ENCODE measurements at regions of chr12 and their contacts with region 1.

Region 1: GRCh38 chr12:52023182-52023975 is 16.6 kb downstream of the TAMALIN start:
- DNase-seq: peak; percentile 95 to 96
- ATAC-seq: peak; percentile 91
- H3K4me3 ChIP-seq: peak overlapping the region; percentile 9 to 35
- H3K27ac ChIP-seq: no peak overlapping the region
- H3K4me1 ChIP-seq: no peaks in the 10 kb centered on the region
- H3K27me3 ChIP-seq: no peaks in the 10 kb centered on the region

Region 2: DNA sequence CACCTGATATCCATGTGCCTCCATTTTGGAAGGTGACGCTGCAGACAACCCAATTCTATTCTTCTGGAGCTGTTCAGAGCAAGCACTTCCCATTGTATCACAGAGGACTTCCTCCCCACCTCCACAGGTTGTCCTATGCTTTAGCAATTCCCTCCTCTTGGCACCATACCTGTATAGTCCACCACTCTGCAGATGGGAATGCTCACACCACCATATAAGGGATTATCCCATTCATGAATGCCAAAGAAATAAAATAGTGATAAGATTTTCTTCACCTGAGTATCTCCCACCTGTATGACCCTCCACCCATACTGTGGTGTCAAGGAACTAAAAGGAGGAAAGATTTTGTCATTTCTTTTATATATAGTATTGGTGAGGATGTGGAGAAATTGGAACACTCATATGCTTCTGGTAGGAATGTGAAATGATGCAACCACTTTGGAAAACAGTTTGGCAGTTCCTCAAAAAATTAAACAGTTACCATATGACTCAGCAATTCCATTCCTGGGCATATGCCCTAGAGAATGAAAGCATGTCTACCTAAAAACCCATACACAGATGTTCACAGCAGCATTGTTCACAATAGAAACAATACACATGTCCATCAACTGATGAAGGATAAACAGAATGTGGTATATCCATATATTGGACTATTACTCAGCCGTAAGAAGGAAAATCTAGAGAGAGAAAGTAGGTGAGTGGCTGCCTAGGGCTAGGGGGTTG is 250.1 kb before region 1 on chr12:
- intact Hi-C with region 1: no loop called
- DNase-seq: no peak
- ATAC-seq: no peak
- H3K4me3 ChIP-seq: no peak overlapping the region
- H3K27ac ChIP-seq: no peak overlapping the region
- H3K4me1 ChIP-seq: no peaks in the 10 kb centered on the region
- H3K27me3 ChIP-seq: peaks cover 0 to 2% of the 10 kb centered on the region in 2 donors

Region 3: GRCh38 chr12:51884676-51885229 is 138.6 kb before region 1 on chr12:
- intact Hi-C with region 1: no loop called
- DNase-seq: no peak
- ATAC-seq: no peak
- H3K4me3 ChIP-seq: no peak overlapping the region
- H3K27ac ChIP-seq: no peak overlapping the region
- H3K4me1 ChIP-seq: no peaks in the 10 kb centered on the region
- H3K27me3 ChIP-seq: no peaks in the 10 kb centered on the region

Region 4: DNA sequence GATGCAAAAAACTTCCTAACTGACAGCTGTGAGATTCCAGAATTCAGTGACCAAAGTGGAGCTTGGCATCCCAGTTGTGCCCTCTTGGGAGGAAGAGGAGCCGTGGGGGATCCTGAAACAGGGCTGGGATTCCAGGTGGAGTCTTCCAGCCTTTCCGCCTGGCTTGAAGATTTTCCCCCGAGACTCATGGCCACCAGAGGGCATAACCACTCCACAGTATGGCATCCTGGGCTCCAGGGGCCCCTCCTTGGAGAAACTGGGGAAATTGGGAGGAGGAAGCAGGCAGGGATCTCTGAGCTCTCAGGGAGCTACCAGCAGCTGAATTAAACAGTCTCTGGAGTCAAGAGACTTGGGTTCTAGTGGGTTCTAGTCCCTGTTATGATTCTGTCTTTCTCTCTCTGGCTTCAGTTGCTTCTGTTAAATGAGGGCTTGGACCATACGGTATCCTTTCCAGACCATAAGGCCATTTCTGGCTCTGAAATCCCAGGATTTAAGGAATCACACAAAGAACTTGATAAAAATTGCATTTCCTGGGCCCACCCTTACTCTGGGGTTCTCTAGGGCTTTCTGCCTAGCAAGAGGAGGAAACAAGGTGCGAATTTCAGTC is 19.2 kb before region 1 on chr12:
- intact Hi-C with region 1: loop called in 1 of 2 experiments (anchors 2 kb)
- DNase-seq: peak; percentile 66 to 78
- ATAC-seq: no peak
- H3K4me3 ChIP-seq: no peak overlapping the region
- H3K27ac ChIP-seq: no peak overlapping the region
- H3K4me1 ChIP-seq: no peaks in the 10 kb centered on the region
- H3K27me3 ChIP-seq: no peaks in the 10 kb centered on the region

Region 5: DNA sequence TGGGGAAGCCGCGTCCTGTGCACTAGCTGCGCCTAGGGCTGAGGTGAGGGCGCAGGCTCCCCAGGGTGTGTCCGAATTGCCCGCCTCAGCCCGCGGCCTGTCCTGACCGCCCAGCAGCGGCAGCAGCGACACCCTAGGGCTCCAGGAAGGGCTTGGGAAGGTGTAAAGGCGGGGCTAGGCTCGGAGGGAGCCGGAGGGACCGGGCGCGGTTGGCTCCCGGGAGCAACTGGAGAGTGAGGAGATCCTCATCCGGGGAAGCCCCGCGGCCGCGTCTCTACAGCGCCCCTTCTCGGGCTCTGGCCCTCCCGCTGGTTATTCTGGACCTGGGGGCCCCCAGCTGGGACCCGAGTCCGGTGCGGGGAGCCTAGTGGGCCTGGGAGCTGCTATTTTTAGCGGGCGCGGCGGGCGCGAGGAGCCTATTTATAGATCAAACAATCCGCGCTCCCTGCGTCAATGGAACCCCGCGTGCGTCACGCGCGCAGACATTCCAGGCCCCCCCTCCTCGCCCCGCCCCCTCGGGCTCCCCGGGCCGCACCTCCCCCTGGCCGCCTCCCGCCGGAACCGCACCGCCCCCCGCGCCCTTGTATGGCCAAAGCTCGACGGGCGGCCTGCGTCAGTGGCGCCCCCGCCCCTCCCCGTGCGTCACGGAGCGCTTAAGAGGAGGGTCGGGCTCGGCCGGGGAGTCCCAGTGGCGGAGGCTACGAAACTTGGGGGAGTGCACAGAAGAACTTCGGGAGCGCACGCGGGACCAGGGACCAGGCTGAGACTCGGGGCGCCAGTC is 27.6 kb after region 1 on chr12 and contains the start of gene NR4A1:
- intact Hi-C with region 1: loop called (anchors 1 to 2 kb)
- DNase-seq: peak; percentile 99
- ATAC-seq: peak; percentile 93
- H3K4me3 ChIP-seq: peak within 1 kb of the TSS; percentile 35 to 49
- H3K27ac ChIP-seq: peak within 1 kb of the TSS; percentile 93 to 97
- H3K4me1 ChIP-seq: no peaks in the 10 kb centered on the region
- H3K27me3 ChIP-seq: no peaks in the 10 kb centered on the region
- total RNA-seq, gene NR4A1: 175 to 677 TPM

Region 6: DNA sequence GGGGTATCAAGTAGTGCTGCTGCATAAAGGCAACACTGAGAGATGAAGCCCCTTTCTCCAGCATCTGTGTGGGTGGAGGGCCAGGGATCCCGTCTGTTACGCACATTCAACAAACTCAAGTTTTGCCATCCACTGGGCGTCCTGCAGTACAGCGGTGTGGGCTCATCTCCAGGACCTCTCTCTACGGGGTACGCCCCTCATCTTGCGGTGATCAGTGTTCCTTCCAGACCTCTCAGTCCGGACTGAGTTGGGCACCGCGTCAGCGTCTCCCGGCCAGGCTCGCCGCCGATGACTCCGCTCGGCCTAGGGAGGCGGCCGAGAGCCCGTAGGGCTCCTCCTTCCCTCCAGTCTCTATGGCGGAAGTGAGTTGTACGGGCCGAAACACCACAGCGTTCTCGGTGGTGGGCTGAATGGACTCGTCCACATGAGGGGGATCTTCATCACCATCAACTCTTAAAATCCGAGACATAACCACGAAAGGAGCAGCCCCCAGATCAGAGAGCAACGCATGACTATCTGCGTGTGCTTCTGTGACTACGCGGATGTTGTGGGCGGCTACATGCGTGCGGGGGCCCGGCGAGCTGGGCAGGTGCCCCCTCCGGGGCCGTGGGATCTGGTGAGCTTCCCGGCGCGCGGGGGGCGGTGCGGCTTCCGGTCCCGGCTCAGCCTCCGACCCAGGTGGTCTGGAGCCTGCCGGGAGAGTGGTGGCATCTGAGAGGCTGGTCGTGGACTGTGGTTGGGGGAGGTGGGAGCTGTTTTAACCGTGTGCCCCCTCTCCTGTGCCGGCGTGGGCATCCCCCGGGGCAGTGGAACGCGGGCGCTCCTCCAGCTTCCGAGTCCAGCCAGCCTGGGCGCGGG is 46.2 kb after region 1 on chr12 and contains the start of gene ATG101:
- intact Hi-C with region 1: loop called in 1 of 2 experiments (anchors 1 kb)
- DNase-seq: peak; percentile 95
- ATAC-seq: peak; percentile 98
- H3K4me3 ChIP-seq: peak within 1 kb of the TSS; percentile 46 to 82
- H3K27ac ChIP-seq: peak within 1 kb of the TSS in 1 of 2 donors; percentile 80
- H3K4me1 ChIP-seq: peaks cover 2 to 4% of the 10 kb centered on the region in 2 donors
- H3K27me3 ChIP-seq: no peaks in the 10 kb centered on the region
- total RNA-seq, gene ATG101: 28.2 to 32.2 TPM

Region 7: DNA sequence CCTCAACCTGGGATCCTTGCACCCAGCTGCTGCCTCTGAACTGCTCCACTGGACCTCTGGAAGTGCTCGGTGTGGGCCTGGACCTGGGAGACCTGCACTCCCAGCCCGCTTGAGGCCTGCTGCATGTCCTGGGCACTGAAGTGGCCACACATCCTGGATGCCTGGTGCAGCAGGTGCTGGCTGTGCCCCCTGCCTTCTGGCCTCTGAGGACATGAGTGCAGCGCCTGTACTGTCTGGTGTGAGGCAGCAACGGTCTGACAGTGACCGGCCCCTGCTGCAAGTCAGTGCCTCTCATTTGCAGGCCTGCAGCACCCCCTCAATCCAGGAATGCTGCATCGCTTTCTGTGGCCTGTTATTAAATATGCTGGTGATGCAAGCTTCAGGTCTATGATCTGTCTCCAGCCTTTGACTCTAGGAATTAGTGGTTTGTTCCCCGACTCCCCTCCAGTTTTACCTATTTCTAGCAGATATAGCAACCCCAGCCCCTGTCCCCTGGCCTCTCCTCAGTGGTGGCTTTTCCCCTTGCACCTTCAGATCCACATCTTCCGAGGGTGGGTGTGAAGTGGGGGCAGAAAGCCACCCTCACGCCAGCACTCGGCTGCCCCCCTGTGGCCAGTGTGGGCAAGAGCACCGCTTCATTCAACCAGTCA is 59.7 kb after region 1 on chr12:
- intact Hi-C with region 1: loop called (anchors 1 to 2 kb)
- DNase-seq: peak in 1 of 2 donors; percentile 88
- ATAC-seq: peak; percentile 79
- H3K4me3 ChIP-seq: no peak overlapping the region
- H3K27ac ChIP-seq: no peak overlapping the region
- H3K4me1 ChIP-seq: no peaks in the 10 kb centered on the region
- H3K27me3 ChIP-seq: no peaks in the 10 kb centered on the region

Region 8: GRCh38 chr12:52561880-52562449 is 538.6 kb after region 1 on chr12:
- intact Hi-C with region 1: no loop called
- DNase-seq: no peak
- ATAC-seq: no peak
- H3K4me3 ChIP-seq: no peak overlapping the region
- H3K27ac ChIP-seq: no peak overlapping the region
- H3K4me1 ChIP-seq: no peaks in the 10 kb centered on the region
- H3K27me3 ChIP-seq: no peaks in the 10 kb centered on the region

Measured in aorta (tissue), 5 donors.